Activated CD4-positive, alpha-beta T cell treated with anti-CD3 and anti-CD28 coated beads for 36 hours (primary cell): ENCODE measurements at regions of chr2 and their contacts with region 1.

Region 1: DNA sequence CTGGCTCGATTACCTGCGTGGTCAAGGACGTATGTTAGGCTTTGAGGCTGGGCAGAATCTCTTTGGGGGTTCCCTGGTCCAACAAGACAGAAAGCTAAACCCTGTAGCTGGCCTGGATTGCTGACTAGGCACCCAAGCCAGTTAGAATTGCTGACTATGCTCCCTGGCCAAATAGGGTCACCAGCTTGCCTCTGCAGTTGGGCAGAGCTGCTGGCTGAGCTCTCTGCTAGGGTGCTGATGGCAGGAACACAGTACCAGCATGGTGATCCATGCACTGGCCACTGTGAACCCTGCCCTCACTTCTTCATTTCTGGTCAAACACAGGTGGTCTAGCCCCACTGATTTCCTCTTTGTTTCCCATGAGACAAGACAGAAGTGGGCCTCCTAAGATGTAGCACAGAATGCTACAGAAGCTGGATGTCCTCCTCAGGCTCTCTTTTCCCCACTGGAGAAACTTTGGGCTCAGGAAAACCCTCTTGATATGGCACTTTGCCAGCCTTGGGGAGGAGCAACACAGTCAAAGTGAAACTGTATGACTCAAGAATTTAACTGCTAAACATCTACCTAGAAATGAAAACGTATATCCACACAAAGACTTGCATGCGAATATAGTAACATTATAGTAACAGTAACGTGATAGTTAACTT is 20.8 kb downstream of the SP140L start:
- DNase-seq: peak; percentile 65
- ATAC-seq: peak; percentile 60
- H3K4me3 Mint-ChIP-seq: peak overlapping the region; percentile 47
- H3K27ac Mint-ChIP-seq: peak overlapping the region; percentile 90
- H3K4me1 Mint-ChIP-seq: peaks cover 69% of the 10 kb centered on the region
- H3K27me3 Mint-ChIP-seq: no peaks in the 10 kb centered on the region

Region 2: GRCh38 chr2:230296917-230297316 is 50.9 kb before region 1 on chr2:
- CTCF ChIA-PET with region 1: no interaction called
- POLR2A ChIA-PET with region 1: no interaction called
- intact Hi-C with region 1: no loop called
- DNase-seq: no peak
- ATAC-seq: no peak
- H3K4me3 Mint-ChIP-seq: no peak overlapping the region
- H3K27ac Mint-ChIP-seq: no peak overlapping the region
- H3K4me1 Mint-ChIP-seq: peaks cover 5% of the 10 kb centered on the region
- H3K27me3 Mint-ChIP-seq: no peaks in the 10 kb centered on the region

Region 3: DNA sequence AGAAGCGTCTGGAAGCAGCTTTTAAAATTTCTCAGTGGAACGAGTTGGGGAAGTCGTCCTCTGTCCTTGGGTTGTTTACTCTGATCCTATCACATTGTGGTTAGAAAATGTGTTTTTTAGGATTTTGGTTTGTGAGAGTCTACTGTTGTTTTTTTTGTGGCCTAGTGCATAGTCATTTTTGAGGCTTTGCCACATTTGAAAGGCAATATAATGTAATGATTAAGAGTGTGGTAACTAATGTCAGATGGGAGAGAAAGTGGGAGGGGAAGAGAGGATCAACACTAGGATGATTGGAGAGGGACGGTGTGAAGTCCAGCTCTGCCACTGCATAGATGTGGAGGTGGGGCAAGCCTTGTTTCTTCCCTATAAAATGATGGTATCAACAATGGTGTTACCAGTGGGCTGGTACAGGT is 12.3 kb before region 1 on chr2:
- CTCF ChIA-PET with region 1: interaction called, 6 read pairs
- POLR2A ChIA-PET with region 1: no interaction called
- intact Hi-C with region 1: loop called (anchors 2 kb)
- DNase-seq: no peak
- ATAC-seq: peak; percentile 68
- H3K4me3 Mint-ChIP-seq: peak overlapping the region; percentile 35
- H3K27ac Mint-ChIP-seq: peak overlapping the region; percentile 82
- H3K4me1 Mint-ChIP-seq: peaks cover 62% of the 10 kb centered on the region
- H3K27me3 Mint-ChIP-seq: no peaks in the 10 kb centered on the region

Region 4: DNA sequence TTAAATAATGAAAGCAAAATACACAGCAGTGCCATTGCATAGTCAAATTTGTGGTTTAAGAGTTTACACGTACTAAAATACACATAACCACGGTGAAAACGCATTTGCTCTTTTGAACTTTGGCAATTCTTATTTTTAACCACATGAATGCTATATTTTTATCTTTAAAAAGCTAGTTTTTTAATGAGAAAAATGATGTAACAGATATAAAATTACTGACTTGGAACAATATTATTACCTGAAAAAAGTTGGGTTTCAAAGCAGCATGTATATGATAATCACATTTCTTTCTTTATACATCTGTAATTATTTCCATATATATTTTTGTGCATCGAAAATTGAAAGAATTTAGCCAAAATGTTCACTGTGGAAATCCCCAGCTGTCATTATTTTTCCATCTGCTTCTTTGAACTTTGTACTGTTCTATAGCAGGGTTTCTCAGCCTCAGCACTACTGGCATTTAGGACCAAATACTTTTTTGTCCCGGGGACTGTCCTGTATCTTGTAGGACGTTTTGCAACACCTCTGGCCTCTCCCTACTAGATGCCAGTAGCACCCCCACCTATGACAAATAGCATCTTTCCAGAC is 289.0 kb after region 1 on chr2:
- CTCF ChIA-PET with region 1: no interaction called
- POLR2A ChIA-PET with region 1: no interaction called
- intact Hi-C with region 1: no loop called
- DNase-seq: peak; percentile 30
- ATAC-seq: peak; percentile 75
- H3K4me3 Mint-ChIP-seq: no peak overlapping the region
- H3K27ac Mint-ChIP-seq: peak overlapping the region; percentile 81
- H3K4me1 Mint-ChIP-seq: peaks cover 20% of the 10 kb centered on the region
- H3K27me3 Mint-ChIP-seq: no peaks in the 10 kb centered on the region